ENCODE measurements at regions of chr18 and their contacts with region 1.

Region 1: GRCh38 chr18:13019301-13019700 is 28.1 kb downstream of the CEP192 start:
- DNase-seq: no peak
- ATAC-seq: no peak
- H3K4me3 ChIP-seq: no peak overlapping the region
- H3K27ac ChIP-seq: no peak overlapping the region
- H3K4me1 ChIP-seq: no peaks in the 10 kb centered on the region
- H3K27me3 ChIP-seq: no peaks in the 10 kb centered on the region
- CTCF ChIP-seq: no peak
- POLR2A ChIP-seq: no peak
- RAD21 ChIP-seq: no peak

Region 2: GRCh38 chr18:12958478-12958877 is 60.8 kb before region 1 on chr18:
- CTCF ChIA-PET with region 1: no interaction called
- POLR2A ChIA-PET with region 1: no interaction called
- RAD21 ChIA-PET with region 1: no interaction called
- intact Hi-C with region 1: loop called (anchors 10 kb)
- DNase-seq: no peak
- ATAC-seq: no peak
- H3K4me3 ChIP-seq: no peak overlapping the region
- H3K27ac ChIP-seq: no peak overlapping the region
- H3K4me1 ChIP-seq: no peaks in the 10 kb centered on the region
- H3K27me3 ChIP-seq: no peaks in the 10 kb centered on the region
- CTCF ChIP-seq: no peak
- POLR2A ChIP-seq: no peak
- RAD21 ChIP-seq: no peak

Measured in HCT116 (cell line).